CD4-positive, alpha-beta memory T cell (primary cell): ENCODE measurements at regions of chr18 and their contacts with region 1.

Region 1: DNA sequence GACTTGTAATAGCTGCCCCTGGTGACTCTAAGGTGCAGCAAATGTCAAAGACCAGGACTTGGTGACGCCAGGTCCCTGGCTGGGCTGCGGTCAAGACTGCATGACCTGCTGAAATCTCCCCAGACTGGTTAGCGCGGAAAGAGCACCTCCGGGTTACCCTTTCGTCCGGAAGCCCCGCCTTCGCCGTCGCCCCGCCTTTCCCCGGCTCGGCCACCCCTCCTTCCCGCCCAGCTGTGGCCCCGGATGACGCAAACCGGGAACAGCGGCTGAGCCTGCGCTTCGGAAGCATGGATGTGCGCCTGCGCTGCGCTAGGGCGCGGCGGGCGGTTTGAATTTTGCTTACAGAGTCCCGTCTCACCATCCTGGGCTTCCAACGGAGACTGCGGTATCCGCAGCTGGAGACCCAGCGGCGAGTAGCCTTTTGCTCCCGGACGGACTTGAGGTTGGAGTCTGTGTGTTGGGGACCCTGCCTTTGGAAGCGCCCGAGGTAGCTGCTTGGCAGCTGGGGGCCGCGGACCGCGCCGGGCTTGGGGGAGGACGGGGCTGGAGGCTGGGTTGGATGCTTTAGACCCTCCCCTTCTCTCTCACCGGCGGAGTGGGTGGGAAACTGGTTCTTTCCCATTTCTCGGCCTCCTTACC is at the start of gene SKA1:
- DNase-seq: peak; percentile 89 to 91 (median 90)
- H3K4me3 ChIP-seq: peak within 1 kb of the TSS; percentile 60 to 63
- H3K4me3 Mint-ChIP-seq: peak within 1 kb of the TSS; percentile 79 to 85 (median 82)
- H3K27ac ChIP-seq: peak within 1 kb of the TSS; percentile 57
- H3K27ac Mint-ChIP-seq: peak within 1 kb of the TSS; percentile 81 to 94 (median 91)
- H3K4me1 ChIP-seq: peaks cover 14% of the 10 kb centered on the region
- H3K4me1 Mint-ChIP-seq: peaks cover 6 to 15% (median 11%) of the 10 kb centered on the region in 4 donors
- H3K27me3 ChIP-seq: peaks cover 5% of the 10 kb centered on the region
- H3K27me3 Mint-ChIP-seq: peaks cover 6 to 10% of the 10 kb centered on the region in 2 donors
- total RNA-seq, gene SKA1: 0.28 to 0.47 TPM

Region 2: GRCh38 chr18:49459404-49460171 is 915.3 kb before region 1 on chr18:
- CTCF ChIA-PET with region 1: no interaction called
- POLR2A ChIA-PET with region 1: no interaction called
- intact Hi-C with region 1: loop called (anchors 1 kb)
- DNase-seq: peak in 4 of 5 donors; percentile 16 to 53 (median 26)
- H3K4me3 ChIP-seq: peak overlapping the region; percentile 43 to 89
- H3K4me3 Mint-ChIP-seq: peak overlapping the region; percentile 86 to 95 (median 91)
- H3K27ac ChIP-seq: peak overlapping the region; percentile 85
- H3K27ac Mint-ChIP-seq: peak overlapping the region; percentile 67 to 93 (median 90)
- H3K4me1 ChIP-seq: peaks cover 45% of the 10 kb centered on the region
- H3K4me1 Mint-ChIP-seq: peaks cover 34 to 61% (median 44%) of the 10 kb centered on the region in 4 donors
- H3K27me3 ChIP-seq: no peaks in the 10 kb centered on the region
- H3K27me3 Mint-ChIP-seq: no peaks in the 10 kb centered on the region

Region 3: GRCh38 chr18:49813319-49814146 is 561.3 kb before region 1 on chr18 and contains the start of gene ACAA2:
- CTCF ChIA-PET with region 1: no interaction called
- POLR2A ChIA-PET with region 1: no interaction called
- intact Hi-C with region 1: loop called (anchors 5 kb)
- DNase-seq: peak; percentile 68 to 84 (median 70)
- H3K4me3 ChIP-seq: peak within 1 kb of the TSS; percentile 88 to 90
- H3K4me3 Mint-ChIP-seq: peak within 1 kb of the TSS; percentile 95 to 100 (median 96)
- H3K27ac ChIP-seq: peak within 1 kb of the TSS; percentile 80
- H3K27ac Mint-ChIP-seq: peak within 1 kb of the TSS; percentile 91 to 99 (median 97)
- H3K4me1 ChIP-seq: peaks cover 51% of the 10 kb centered on the region
- H3K4me1 Mint-ChIP-seq: peaks cover 39 to 69% (median 53%) of the 10 kb centered on the region in 4 donors
- H3K27me3 ChIP-seq: no peaks in the 10 kb centered on the region
- H3K27me3 Mint-ChIP-seq: no peaks in the 10 kb centered on the region
- total RNA-seq, gene ACAA2: 21.8 to 23.8 TPM

Region 4: DNA sequence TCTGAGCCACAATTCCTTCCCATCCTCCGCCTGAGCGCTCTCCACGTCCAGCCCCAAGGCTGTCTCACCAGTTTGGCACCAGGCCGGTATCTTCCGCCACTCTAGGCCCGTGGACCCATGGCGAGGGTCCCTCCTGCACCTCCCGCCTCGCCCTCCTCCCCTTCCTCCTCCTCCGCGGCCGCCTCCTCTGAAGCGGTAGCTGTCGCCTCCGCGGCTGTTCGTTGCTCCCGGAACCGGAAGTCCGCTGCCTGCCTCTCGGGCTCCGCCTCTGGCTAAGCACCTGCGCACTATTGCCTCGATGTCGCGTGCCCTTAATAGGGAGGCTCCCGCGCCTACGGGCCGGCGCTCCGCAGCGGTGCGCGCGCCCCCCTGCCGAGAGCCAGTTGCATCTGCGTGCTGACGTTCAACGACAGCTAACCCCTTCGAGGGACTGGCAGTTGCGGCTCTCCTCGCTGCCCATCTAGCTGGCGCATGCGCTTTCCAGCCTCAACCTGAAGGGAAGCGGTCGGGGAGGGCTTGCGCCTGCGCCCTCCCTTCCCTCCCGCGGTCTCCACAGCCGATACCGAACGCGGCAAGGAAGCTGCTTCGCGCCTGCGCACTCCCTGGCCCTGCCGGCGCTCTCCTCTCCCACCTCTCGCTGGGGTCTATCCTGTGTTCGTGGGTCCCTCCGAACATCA is 93.4 kb before region 1 on chr18 and contains the start of gene MBD1:
- CTCF ChIA-PET with region 1: no interaction called
- POLR2A ChIA-PET with region 1: interaction called, 13 read pairs
- intact Hi-C with region 1: loop called (anchors 1 kb)
- DNase-seq: peak; percentile 97 to 99 (median 98)
- H3K4me3 ChIP-seq: peak within 1 kb of the TSS; percentile 45 to 97
- H3K4me3 Mint-ChIP-seq: peak within 1 kb of the TSS; percentile 96 to 99 (median 98)
- H3K27ac ChIP-seq: peak within 1 kb of the TSS; percentile 95
- H3K27ac Mint-ChIP-seq: peak within 1 kb of the TSS; percentile 88 to 99 (median 98)
- H3K4me1 ChIP-seq: peaks cover 36% of the 10 kb centered on the region
- H3K4me1 Mint-ChIP-seq: peaks cover 31 to 59% (median 47%) of the 10 kb centered on the region in 4 donors
- H3K27me3 ChIP-seq: no peaks in the 10 kb centered on the region
- H3K27me3 Mint-ChIP-seq: no peaks in the 10 kb centered on the region
- total RNA-seq, gene MBD1: 135 to 144 TPM

Region 5: DNA sequence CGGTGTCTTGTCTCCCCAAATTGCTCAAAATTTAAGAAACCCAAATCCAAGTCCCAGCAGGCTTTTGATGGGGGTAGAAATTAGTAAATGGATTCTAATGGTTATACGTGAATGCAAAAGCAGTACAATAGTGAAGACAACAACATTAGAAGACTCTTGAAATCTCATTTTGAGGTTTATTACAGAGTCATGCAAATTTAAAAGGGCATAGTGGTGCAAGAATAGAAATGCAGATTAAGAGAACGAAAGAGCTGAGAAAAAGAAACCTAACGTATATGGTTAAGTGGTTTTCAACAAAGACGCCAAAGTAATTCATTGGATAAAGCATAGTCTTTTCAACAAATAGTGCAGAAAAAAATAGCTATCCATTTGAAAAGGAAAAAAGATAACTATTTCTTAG is 54.2 kb before region 1 on chr18:
- CTCF ChIA-PET with region 1: no interaction called
- POLR2A ChIA-PET with region 1: no interaction called
- intact Hi-C with region 1: no loop called
- DNase-seq: no peak
- H3K4me3 ChIP-seq: no peak overlapping the region
- H3K4me3 Mint-ChIP-seq: peak overlapping the region in 6 of 8 donors; percentile 1 to 49 (median 22)
- H3K27ac ChIP-seq: no peak overlapping the region
- H3K27ac Mint-ChIP-seq: no peak overlapping the region
- H3K4me1 ChIP-seq: no peaks in the 10 kb centered on the region
- H3K4me1 Mint-ChIP-seq: peaks cover 0 to 9% (median 7%) of the 10 kb centered on the region in 4 donors
- H3K27me3 ChIP-seq: no peaks in the 10 kb centered on the region
- H3K27me3 Mint-ChIP-seq: peaks cover 4 to 14% of the 10 kb centered on the region in 2 donors

Region 6: DNA sequence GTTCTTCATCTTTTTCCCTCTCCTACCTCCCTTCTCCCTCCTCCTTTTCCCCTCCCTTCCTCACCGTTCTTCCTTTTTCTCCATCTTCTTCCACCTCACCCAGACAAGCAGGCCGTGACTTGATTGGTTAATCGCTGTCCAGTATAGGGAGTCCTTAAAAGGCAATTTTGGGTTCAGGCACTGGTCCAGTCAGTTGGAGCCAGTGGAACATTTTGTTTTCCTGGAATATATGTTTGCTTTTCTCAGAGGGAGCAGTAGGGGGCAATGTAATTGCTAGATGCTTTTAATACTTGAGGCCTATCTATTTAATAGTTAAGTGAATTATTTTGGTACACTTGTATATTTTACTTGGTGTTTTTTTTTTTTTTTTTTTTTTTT is 607.9 kb after region 1 on chr18:
- CTCF ChIA-PET with region 1: no interaction called
- POLR2A ChIA-PET with region 1: no interaction called
- intact Hi-C with region 1: no loop called
- DNase-seq: no peak
- H3K4me3 ChIP-seq: no peak overlapping the region
- H3K4me3 Mint-ChIP-seq: no peak overlapping the region
- H3K27ac ChIP-seq: no peak overlapping the region
- H3K27ac Mint-ChIP-seq: no peak overlapping the region
- H3K4me1 ChIP-seq: no peaks in the 10 kb centered on the region
- H3K4me1 Mint-ChIP-seq: peaks cover 5 to 14% (median 12%) of the 10 kb centered on the region in 4 donors
- H3K27me3 ChIP-seq: no peaks in the 10 kb centered on the region
- H3K27me3 Mint-ChIP-seq: no peaks in the 10 kb centered on the region